CD8-positive, alpha-beta memory T cell (primary cell): ENCODE measurements at regions of chr19 and their contacts with region 1.

Region 1: DNA sequence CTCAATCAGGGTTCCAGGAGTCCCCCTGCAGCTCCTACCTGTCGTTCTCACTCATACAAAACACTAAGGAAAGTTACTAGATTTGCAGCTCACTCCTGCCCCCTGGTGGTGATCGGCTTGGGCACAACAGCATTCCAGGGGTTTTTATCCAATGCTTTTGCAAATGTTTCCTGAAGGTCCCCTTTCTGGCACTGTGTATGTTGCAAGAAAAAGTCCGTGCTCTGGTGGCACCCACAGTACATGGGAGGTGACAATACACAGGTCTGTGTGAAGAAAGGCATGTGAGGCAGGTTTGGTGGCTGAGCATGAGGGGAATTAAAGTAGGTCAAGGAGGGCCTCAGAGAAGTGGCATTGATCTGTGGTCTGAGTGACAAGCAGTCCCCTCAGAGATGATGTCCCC is 8.6 kb upstream of the TYK2 start:
- DNase-seq: peak; percentile 67 to 86 (median 79)
- H3K4me3 ChIP-seq: no peak overlapping the region
- H3K4me3 Mint-ChIP-seq: peak overlapping the region in 1 of 7 donors; percentile 73
- H3K27ac ChIP-seq: no peak overlapping the region
- H3K27ac Mint-ChIP-seq: peak overlapping the region; percentile 25 to 77 (median 57)
- H3K4me1 ChIP-seq: no peaks in the 10 kb centered on the region
- H3K4me1 Mint-ChIP-seq: peaks cover 0 to 6% (median 6%) of the 10 kb centered on the region in 3 donors
- H3K27me3 ChIP-seq: no peaks in the 10 kb centered on the region
- H3K27me3 Mint-ChIP-seq: no peaks in the 10 kb centered on the region

Region 2: DNA sequence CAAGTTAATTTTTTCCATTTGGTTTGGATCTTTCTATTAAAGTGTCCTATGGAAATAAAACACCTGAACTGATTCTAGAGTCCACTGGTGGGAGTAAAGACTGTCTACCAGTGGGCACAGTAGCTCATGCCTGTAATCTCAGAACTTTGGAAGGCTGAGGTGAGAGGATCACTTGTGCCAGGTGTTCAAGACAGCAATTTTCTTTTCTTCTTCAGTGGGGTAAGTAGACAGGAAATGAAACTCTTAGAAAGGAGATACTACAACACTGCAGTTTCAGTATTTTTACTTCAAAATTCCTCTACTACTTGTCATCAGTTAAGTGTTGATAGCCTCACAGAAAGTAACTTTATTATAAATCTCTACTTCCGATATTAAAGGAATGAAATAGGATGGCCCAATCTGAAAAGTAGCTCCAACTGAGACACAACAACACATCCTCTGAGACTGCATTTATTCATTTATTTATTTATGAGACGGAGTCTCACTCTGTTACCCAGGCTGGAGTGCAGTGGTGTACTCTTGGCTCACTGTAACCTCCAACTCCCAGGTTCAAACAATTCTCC is 220.5 kb before region 1 on chr19:
- CTCF ChIA-PET with region 1: no interaction called
- POLR2A ChIA-PET with region 1: no interaction called
- DNase-seq: no peak
- H3K4me3 ChIP-seq: no peak overlapping the region
- H3K4me3 Mint-ChIP-seq: no peak overlapping the region
- H3K27ac ChIP-seq: no peak overlapping the region
- H3K27ac Mint-ChIP-seq: peak overlapping the region in 2 of 8 donors; percentile 47 to 71
- H3K4me1 ChIP-seq: no peaks in the 10 kb centered on the region
- H3K4me1 Mint-ChIP-seq: peaks cover 0 to 2% (median 0%) of the 10 kb centered on the region in 3 donors
- H3K27me3 ChIP-seq: no peaks in the 10 kb centered on the region
- H3K27me3 Mint-ChIP-seq: no peaks in the 10 kb centered on the region

Region 3: GRCh38 chr19:10259162-10259905 is 129.6 kb before region 1 on chr19:
- CTCF ChIA-PET with region 1: interaction called, 355 read pairs
- POLR2A ChIA-PET with region 1: interaction called, 6 read pairs
- DNase-seq: peak; percentile 77 to 91 (median 79)
- H3K4me3 ChIP-seq: no peak overlapping the region
- H3K4me3 Mint-ChIP-seq: peak overlapping the region in 1 of 7 donors; percentile 81
- H3K27ac ChIP-seq: no peak overlapping the region
- H3K27ac Mint-ChIP-seq: peak overlapping the region in 3 of 8 donors; percentile 12 to 95 (median 38)
- H3K4me1 ChIP-seq: no peaks in the 10 kb centered on the region
- H3K4me1 Mint-ChIP-seq: peaks cover 0 to 23% (median 0%) of the 10 kb centered on the region in 3 donors
- H3K27me3 ChIP-seq: no peaks in the 10 kb centered on the region
- H3K27me3 Mint-ChIP-seq: no peaks in the 10 kb centered on the region

Region 4: DNA sequence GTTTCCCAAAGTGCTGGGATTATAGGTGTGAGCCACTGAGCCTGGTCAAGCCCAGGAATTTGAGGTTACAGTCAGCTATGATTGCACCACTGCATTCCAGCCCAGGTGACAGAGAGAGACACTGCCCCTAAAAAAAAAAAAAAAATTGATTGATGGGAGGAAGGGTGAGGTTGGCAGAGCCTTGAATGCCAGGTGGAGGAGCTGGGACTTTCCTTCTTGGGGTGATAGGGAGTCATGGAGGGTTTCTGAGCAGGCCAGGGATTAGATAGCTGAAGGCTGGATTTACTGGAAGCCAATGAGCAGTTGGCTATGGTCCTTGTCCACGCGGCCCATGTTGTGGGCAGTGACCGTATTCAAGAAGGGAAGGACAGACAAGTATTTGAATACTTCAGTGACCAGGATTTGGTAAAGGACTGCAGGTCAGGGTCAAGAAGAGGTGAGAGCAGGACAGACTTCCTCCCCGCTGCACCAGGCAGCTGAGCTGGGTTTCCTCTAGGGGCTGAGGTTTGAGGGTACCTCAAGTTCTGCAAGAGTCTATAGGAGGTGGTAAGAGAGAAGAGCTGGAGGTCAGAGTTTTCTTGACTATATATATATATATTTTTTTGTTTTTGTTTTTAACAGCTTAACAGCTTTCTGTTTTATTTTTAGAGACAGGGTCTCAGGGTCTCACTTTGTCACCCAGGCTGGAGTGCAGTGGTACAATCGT is 109.1 kb before region 1 on chr19:
- CTCF ChIA-PET with region 1: interaction called, 17 read pairs
- POLR2A ChIA-PET with region 1: no interaction called
- DNase-seq: no peak
- H3K4me3 ChIP-seq: no peak overlapping the region
- H3K4me3 Mint-ChIP-seq: peak overlapping the region in 6 of 7 donors; percentile 9 to 72 (median 58)
- H3K27ac ChIP-seq: no peak overlapping the region
- H3K27ac Mint-ChIP-seq: peak overlapping the region; percentile 24 to 95 (median 92)
- H3K4me1 ChIP-seq: no peaks in the 10 kb centered on the region
- H3K4me1 Mint-ChIP-seq: peaks cover 17 to 30% (median 24%) of the 10 kb centered on the region in 3 donors
- H3K27me3 ChIP-seq: no peaks in the 10 kb centered on the region
- H3K27me3 Mint-ChIP-seq: no peaks in the 10 kb centered on the region

Region 5: GRCh38 chr19:10403137-10404021 is 14.4 kb after region 1 on chr19 and contains the start of gene CDC37:
- CTCF ChIA-PET with region 1: interaction called, 24 read pairs
- POLR2A ChIA-PET with region 1: interaction called, 6 read pairs
- DNase-seq: peak; percentile 96 to 98 (median 97)
- H3K4me3 ChIP-seq: peak within 1 kb of the TSS; percentile 99
- H3K4me3 Mint-ChIP-seq: peak within 1 kb of the TSS; percentile 88 to 99 (median 96)
- H3K27ac ChIP-seq: peak within 1 kb of the TSS; percentile 98
- H3K27ac Mint-ChIP-seq: peak within 1 kb of the TSS; percentile 97 to 100 (median 99)
- H3K4me1 ChIP-seq: peaks cover 69% of the 10 kb centered on the region
- H3K4me1 Mint-ChIP-seq: peaks cover 60 to 84% (median 70%) of the 10 kb centered on the region in 3 donors
- H3K27me3 ChIP-seq: no peaks in the 10 kb centered on the region
- H3K27me3 Mint-ChIP-seq: peaks cover 0 to 11% of the 10 kb centered on the region in 2 donors
- total RNA-seq, gene CDC37: 273 to 277 TPM